ENCODE measurements at regions of chrX and their contacts with region 1.

Region 1: DNA sequence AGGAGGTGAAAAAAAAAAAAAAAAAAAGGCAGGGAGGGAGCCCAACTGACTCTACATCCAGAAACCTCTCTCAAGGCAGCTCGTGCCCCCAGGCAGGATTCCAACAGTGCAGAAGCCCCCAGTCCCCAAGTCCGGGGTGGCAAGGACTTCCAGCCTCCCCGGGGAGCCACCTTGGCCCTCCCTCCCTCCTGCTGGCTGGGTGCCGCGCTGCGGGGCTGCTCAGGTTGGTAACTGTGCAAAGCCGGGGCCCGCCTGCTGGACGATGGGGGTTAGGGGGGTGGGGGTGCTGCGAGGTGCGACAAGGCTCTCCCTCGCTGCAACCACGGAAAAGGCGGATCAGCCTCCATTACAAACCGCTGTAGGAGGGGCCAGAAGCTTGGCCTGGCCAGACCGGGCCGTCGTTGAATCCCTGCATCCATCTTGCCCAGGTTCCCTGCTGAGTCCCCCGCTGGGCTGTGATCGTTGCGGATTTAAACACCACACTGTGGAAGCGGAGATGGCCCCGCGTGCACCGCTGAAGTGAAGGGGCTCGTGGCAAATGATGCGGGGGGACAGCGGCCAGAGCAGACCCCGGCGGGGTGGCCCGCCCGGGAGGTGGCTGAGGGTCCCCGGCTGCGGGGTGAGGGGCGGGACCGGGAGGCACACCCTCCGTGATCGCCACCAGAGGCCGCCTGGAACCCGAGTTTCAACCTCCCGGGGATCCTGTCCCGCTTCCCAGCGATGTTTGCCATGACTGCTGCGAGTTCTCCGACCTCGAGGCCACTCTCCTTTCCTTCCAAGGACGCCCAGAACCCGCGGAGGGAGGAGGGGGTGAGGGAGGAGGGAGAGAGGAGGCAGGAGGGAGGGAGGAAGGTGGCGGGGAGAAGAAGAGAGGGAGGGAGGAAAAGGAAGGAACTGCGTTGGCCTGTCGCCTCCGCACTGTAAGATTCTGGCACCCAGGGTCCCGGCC is 58.0 kb upstream of the DDX3X start:
- DNase-seq: peak in 1 of 2 experiments; percentile 41
- H3K4me3 ChIP-seq: peak overlapping the region; percentile 50; the same call in 1 of the 2 replicates
- H3K27ac ChIP-seq: no peak overlapping the region
- H3K4me1 ChIP-seq: no peaks in the 10 kb centered on the region
- H3K27me3 ChIP-seq: no peaks in the 10 kb centered on the region
- CTCF ChIP-seq: peak; percentile 44

Region 2: DNA sequence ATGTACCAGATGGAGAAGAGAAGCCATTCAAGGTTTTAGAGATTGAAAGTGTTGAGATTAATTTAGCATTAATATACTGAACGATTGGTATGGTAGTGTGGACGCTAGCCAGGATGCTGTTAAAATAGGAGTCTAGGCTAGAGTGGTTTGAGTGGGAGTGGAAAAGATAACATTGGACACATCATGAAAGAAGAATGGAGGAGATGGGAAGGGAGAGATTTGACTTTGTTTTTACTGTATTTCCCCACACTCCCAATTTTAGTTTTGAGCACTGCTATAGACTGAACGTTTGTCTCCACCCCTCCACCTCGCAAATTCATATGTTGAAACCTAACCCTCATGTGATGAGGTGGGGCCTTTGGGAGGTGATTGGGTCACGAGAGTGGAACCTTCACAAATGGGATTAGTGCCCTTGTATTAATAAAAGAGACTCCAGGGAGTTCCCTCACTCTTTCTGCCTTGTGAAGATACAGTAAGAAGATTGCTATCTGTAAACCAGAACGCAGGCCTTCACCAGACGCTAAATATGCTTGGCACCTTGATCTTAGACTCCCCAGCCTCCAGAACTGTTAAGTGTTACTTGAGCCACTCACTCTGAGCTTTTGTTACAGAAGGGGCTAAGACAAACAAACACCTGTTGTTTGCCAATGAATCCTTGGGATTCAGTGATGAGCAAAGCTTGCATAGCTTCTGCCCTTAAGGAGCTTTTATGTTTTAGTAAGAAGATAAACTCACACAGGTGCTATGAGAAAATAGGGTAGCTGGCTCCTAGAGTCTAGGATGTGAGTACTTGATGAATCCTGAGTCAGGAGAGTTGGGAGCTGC is 164.9 kb before region 1 on chrX:
- CTCF ChIA-PET with region 1: no interaction called
- POLR2A ChIA-PET with region 1: no interaction called
- intact Hi-C with region 1: no loop called
- DNase-seq: no peak
- H3K4me3 ChIP-seq: no peak overlapping the region
- H3K27ac ChIP-seq: no peak overlapping the region
- H3K4me1 ChIP-seq: no peaks in the 10 kb centered on the region
- H3K27me3 ChIP-seq: no peaks in the 10 kb centered on the region
- CTCF ChIP-seq: no peak

Region 3: DNA sequence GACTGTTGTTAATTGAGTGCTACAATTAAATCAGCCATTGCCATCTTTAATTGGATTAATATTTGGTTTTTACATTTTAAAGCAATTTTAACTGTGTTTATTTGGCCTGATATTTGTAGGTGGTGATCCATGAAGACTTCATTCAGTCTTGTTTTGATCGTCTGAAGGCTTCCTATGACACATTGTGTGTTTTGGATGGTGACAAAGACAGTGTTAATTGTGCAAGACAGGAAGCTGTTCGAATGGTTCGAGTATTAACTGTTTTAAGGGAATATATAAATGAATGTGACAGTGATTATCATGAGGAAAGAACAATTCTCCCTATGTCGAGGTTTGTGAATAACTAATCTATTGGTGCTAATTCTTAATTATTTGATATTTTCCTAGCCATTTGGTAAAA is 108.0 kb before region 1 on chrX:
- CTCF ChIA-PET with region 1: no interaction called
- POLR2A ChIA-PET with region 1: interaction called, 15 read pairs
- intact Hi-C with region 1: no loop called
- DNase-seq: no peak
- H3K4me3 ChIP-seq: no peak overlapping the region
- H3K27ac ChIP-seq: no peak overlapping the region
- H3K4me1 ChIP-seq: no peaks in the 10 kb centered on the region
- H3K27me3 ChIP-seq: no peaks in the 10 kb centered on the region
- CTCF ChIP-seq: no peak

Region 4: GRCh38 chrX:41224606-41225005 is 51.3 kb before region 1 on chrX:
- CTCF ChIA-PET with region 1: no interaction called
- POLR2A ChIA-PET with region 1: no interaction called
- intact Hi-C with region 1: no loop called
- DNase-seq: no peak
- H3K4me3 ChIP-seq: no peak overlapping the region
- H3K27ac ChIP-seq: no peak overlapping the region
- H3K4me1 ChIP-seq: no peaks in the 10 kb centered on the region
- H3K27me3 ChIP-seq: no peaks in the 10 kb centered on the region
- CTCF ChIP-seq: no peak

Region 5: DNA sequence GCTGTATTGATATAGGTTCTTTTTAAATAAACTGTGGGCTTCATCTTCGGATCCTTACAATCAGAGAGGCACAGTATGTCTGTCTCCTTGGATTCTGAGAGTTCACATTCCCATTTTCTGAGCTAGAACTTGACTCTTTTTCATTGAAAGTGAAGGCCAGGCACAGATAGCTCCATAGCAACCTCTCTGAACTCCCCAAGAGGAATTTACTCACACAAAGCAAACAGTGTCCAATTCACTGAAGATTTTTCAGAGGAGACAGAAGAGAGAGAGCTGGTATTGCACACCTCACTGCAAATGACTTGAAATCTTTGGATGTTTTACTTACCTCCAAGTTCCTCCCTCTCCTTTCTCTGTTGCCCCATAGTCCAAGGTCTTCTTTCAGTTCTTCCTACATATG is 778.3 kb after region 1 on chrX:
- CTCF ChIA-PET with region 1: no interaction called
- POLR2A ChIA-PET with region 1: no interaction called
- intact Hi-C with region 1: no loop called
- DNase-seq: no peak
- H3K4me3 ChIP-seq: no peak overlapping the region
- H3K27ac ChIP-seq: no peak overlapping the region
- H3K4me1 ChIP-seq: no peaks in the 10 kb centered on the region
- H3K27me3 ChIP-seq: no peaks in the 10 kb centered on the region
- CTCF ChIP-seq: no peak